Stomach (tissue), 19 donors: ENCODE measurements at regions of chr3 and their contacts with region 1.

Region 1: DNA sequence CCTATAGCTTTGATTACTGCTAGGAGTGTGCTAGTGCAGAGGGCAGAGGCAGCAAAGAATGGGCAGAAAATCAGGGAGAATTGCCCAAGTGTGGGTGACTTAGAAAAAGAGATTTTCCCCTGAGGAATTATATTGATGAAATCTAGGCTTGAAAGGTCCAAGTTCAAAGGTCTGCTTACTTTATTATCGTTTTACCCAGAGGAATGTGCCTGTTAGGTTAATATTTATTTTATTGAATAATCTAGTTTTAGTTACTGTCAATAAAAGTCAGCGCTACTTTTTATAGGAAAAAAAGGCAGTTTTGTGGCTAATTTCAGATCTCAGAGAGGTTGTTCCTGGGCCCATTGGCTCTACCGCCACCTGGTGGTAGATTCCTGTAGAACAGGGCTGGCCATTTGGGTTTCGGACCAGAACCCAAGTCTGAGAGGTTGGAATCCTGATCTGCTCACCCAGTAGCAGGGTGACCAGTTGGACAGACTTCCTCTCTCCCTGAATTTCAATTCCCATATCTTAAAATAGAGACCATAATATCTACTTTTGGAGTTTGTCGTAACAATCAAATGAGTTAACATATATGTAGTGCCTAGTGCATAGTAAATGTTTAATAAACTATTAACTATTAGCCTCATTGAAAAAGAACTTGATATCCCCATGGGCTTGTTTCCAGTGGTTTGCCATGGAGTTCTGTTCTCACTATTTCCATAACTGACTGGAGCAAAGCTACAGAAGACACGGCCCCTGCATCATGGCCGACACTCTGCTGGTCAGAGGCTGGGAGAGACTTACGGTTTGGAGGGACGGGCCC is 62.7 kb upstream of the ZNF148 start:
- DNase-seq: peak; percentile 63 to 76
- H3K4me3 ChIP-seq: no peak overlapping the region
- H3K27ac ChIP-seq: no peak overlapping the region
- H3K4me1 ChIP-seq: peaks cover 6 to 26% (median 17%) of the 10 kb centered on the region in 4 donors
- H3K27me3 ChIP-seq: no peaks in the 10 kb centered on the region
- CTCF ChIP-seq: peak in 5 of 7 experiments; percentile 73 to 98 (median 90)
- EP300 ChIP-seq: no peak
- POLR2A ChIP-seq: no peak

Region 2: GRCh38 chr3:124887177-124887931 is 550.5 kb before region 1 on chr3 and contains the start of gene ITGB5:
- intact Hi-C with region 1: no loop called
- DNase-seq: peak; percentile 83 to 90
- H3K4me3 ChIP-seq: peak within 1 kb of the TSS; percentile 64 to 78 (median 73)
- H3K27ac ChIP-seq: peak within 1 kb of the TSS; percentile 89 to 93 (median 92)
- H3K4me1 ChIP-seq: peaks cover 10 to 52% (median 25%) of the 10 kb centered on the region in 4 donors
- H3K27me3 ChIP-seq: peaks cover 0 to 19% (median 4%) of the 10 kb centered on the region in 3 donors
- CTCF ChIP-seq: no peak
- EP300 ChIP-seq: no peak
- POLR2A ChIP-seq: no peak
- total RNA-seq, gene ITGB5: 49.2 to 205 (median 81.1) TPM

Region 3: DNA sequence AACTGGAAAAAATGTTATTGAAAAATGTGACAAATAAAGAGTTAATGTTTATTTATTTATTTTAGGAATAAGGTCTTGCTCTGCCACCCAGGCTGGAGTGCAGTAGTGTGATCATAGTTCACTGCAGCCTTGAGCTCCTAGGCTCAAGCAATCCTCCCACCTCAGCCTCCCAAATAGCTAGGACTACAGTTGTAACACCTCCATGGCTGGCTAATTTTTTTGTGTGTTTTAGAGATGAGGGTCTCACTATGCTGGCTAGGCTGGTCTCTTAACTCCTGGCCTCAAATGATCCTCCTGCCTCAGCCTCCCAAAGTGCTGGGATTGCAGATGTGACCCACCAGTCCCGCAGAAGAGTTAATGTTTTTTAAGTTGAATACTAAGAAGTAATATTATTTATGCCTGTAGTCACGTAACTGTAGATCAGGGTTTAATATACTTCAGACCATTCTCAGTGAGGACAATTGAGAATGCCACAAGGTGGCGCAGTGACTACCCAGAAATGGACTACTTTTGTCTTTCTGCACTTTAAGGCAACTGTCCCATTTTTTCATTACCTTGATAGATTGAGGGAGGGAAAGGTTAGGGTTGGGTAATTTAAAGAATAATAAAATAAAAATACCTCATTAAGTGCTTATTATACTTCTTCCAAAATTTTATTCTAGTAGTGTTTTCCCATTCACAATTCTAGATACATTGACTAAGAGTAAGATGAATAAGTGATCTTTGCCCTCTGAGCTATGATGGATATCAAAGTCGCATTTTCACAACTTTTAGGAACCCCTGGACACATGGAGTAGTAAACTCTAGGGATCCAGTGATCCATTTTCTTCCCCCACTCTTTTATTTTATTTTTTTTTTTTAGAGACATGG is 509.3 kb before region 1 on chr3:
- intact Hi-C with region 1: loop called (anchors 10 kb)
- DNase-seq: peak; percentile 76 to 87
- H3K4me3 ChIP-seq: no peak overlapping the region
- H3K27ac ChIP-seq: no peak overlapping the region
- H3K4me1 ChIP-seq: peaks cover 0 to 17% (median 3%) of the 10 kb centered on the region in 4 donors
- H3K27me3 ChIP-seq: no peaks in the 10 kb centered on the region
- CTCF ChIP-seq: peak in 5 of 7 experiments; percentile 63 to 75 (median 68)
- EP300 ChIP-seq: no peak
- POLR2A ChIP-seq: no peak

Region 4: GRCh38 chr3:124995460-124995994 is 442.3 kb before region 1 on chr3:
- intact Hi-C with region 1: loop called (anchors 10 kb)
- DNase-seq: peak; percentile 55 to 88
- H3K4me3 ChIP-seq: no peak overlapping the region
- H3K27ac ChIP-seq: peak overlapping the region in 4 of 5 donors; percentile 3 to 51 (median 17)
- H3K4me1 ChIP-seq: peaks cover 13 to 37% (median 25%) of the 10 kb centered on the region in 4 donors
- H3K27me3 ChIP-seq: no peaks in the 10 kb centered on the region
- CTCF ChIP-seq: peak in 4 of 7 experiments; percentile 44 to 68 (median 56)
- EP300 ChIP-seq: no peak
- POLR2A ChIP-seq: no peak

Region 5: DNA sequence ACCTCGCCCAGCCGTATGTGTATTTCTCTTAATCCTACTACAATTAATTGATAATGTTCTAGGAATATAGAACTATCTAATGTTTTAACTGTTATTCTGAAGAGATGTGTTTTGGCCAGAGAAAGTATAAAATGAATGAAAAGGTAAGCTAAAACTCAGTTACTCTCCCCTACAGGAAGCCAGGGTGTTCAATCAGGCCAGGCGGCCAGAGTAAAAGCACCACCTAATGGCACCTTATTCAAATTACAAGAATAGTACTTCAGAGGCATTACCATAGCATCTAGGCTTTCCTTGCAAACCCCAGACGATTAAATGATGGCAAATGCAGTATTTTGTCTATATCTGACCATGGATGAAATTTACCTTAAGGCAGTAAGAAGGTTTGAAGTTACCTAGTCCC is 235.6 kb before region 1 on chr3:
- intact Hi-C with region 1: no loop called
- DNase-seq: no peak
- H3K4me3 ChIP-seq: no peak overlapping the region
- H3K27ac ChIP-seq: no peak overlapping the region
- H3K4me1 ChIP-seq: no peaks in the 10 kb centered on the region
- H3K27me3 ChIP-seq: no peaks in the 10 kb centered on the region
- CTCF ChIP-seq: no peak
- EP300 ChIP-seq: no peak
- POLR2A ChIP-seq: no peak